ENCODE measurements at regions of chr20 and their contacts with region 1.

Region 1: GRCh38 chr20:45293041-45294002 is 13.3 kb upstream of the RBPJL start:
- DNase-seq: peak; percentile 87
- H3K4me3 ChIP-seq: peak overlapping the region; percentile 32 to 58 (median 49)
- H3K27ac ChIP-seq: peak overlapping the region in 3 of 4 donors; percentile 48 to 57 (median 48)
- H3K4me1 ChIP-seq: peaks cover 0 to 21% (median 11%) of the 10 kb centered on the region in 4 donors
- H3K27me3 ChIP-seq: peaks cover 0 to 37% (median 0%) of the 10 kb centered on the region in 3 donors
- CTCF ChIP-seq: peak; percentile 63 to 98 (median 84)
- EP300 ChIP-seq: no peak
- POLR2A ChIP-seq: no peak

Region 2: DNA sequence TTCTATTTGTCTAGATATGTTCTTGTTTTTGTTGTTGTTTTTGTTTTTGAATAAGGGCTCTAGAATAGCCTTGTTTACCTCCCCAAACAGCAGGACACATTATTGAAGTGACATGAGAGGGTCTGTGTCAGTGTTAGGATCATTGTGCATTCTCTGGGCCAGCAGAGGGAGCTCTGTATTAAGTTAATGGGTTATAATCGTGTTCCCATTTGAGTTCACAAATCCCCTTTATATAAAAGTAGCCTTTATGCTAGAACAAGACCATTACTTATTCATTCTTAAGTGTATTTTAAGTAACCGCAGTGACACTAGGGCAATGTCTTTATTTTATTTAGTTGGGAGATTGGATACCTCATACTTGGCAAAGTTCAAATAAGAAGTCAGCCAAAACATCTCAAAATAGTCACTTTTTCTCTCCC is 282.2 kb before region 1 on chr20:
- intact Hi-C with region 1: loop called (anchors 10 kb)
- DNase-seq: no peak
- H3K4me3 ChIP-seq: no peak overlapping the region
- H3K27ac ChIP-seq: no peak overlapping the region
- H3K4me1 ChIP-seq: peaks cover 0 to 13% (median 5%) of the 10 kb centered on the region in 4 donors
- H3K27me3 ChIP-seq: no peaks in the 10 kb centered on the region
- CTCF ChIP-seq: peak; percentile 25 to 61 (median 48)
- EP300 ChIP-seq: no peak
- POLR2A ChIP-seq: no peak

Region 3: GRCh38 chr20:45044084-45044573 is 249.2 kb before region 1 on chr20:
- intact Hi-C with region 1: loop called (anchors 2 kb)
- DNase-seq: no peak
- H3K4me3 ChIP-seq: no peak overlapping the region
- H3K27ac ChIP-seq: no peak overlapping the region
- H3K4me1 ChIP-seq: peaks cover 0 to 23% (median 10%) of the 10 kb centered on the region in 4 donors
- H3K27me3 ChIP-seq: no peaks in the 10 kb centered on the region
- CTCF ChIP-seq: peak in 3 of 4 experiments; percentile 55 to 83 (median 78)
- EP300 ChIP-seq: no peak
- POLR2A ChIP-seq: no peak

Region 4: GRCh38 chr20:45095753-45096371 is 197.5 kb before region 1 on chr20:
- intact Hi-C with region 1: loop called (anchors 5 kb)
- DNase-seq: no peak
- H3K4me3 ChIP-seq: no peak overlapping the region
- H3K27ac ChIP-seq: no peak overlapping the region
- H3K4me1 ChIP-seq: peaks cover 0 to 17% (median 14%) of the 10 kb centered on the region in 4 donors
- H3K27me3 ChIP-seq: peaks cover 16 to 51% (median 29%) of the 10 kb centered on the region in 3 donors
- CTCF ChIP-seq: peak in 3 of 4 experiments; percentile 41 to 74 (median 42)
- EP300 ChIP-seq: no peak
- POLR2A ChIP-seq: no peak

Region 5: GRCh38 chr20:45254869-45255266 is 38.5 kb before region 1 on chr20:
- intact Hi-C with region 1: no loop called
- DNase-seq: no peak
- H3K4me3 ChIP-seq: no peak overlapping the region
- H3K27ac ChIP-seq: peak overlapping the region in 2 of 4 donors; percentile 20 to 59
- H3K4me1 ChIP-seq: peaks cover 0 to 7% (median 0%) of the 10 kb centered on the region in 4 donors
- H3K27me3 ChIP-seq: peaks cover 0 to under 1% (median 0%) of the 10 kb centered on the region in 3 donors
- CTCF ChIP-seq: no peak
- EP300 ChIP-seq: no peak
- POLR2A ChIP-seq: no peak

Region 6: GRCh38 chr20:45329510-45330319 is 36.4 kb after region 1 on chr20:
- intact Hi-C with region 1: no loop called
- DNase-seq: no peak
- H3K4me3 ChIP-seq: no peak overlapping the region
- H3K27ac ChIP-seq: peak overlapping the region in 3 of 4 donors; percentile 13 to 50 (median 26)
- H3K4me1 ChIP-seq: no peaks in the 10 kb centered on the region
- H3K27me3 ChIP-seq: no peaks in the 10 kb centered on the region
- CTCF ChIP-seq: no peak
- EP300 ChIP-seq: no peak
- POLR2A ChIP-seq: no peak

Measured in sigmoid colon (tissue), 7 donors.